ENCODE measurements at regions of chr1 and their contacts with region 1.

Region 1: GRCh38 chr1:224922404-224923164 is 6.9 kb upstream of the DNAH14 start:
- DNase-seq: peak; percentile 76
- H3K4me3 Mint-ChIP-seq: no peak overlapping the region
- H3K27ac Mint-ChIP-seq: no peak overlapping the region
- H3K4me1 Mint-ChIP-seq: peaks cover 4% of the 10 kb centered on the region
- H3K27me3 Mint-ChIP-seq: no peaks in the 10 kb centered on the region
- CTCF ChIP-seq: peak; percentile 99

Region 2: DNA sequence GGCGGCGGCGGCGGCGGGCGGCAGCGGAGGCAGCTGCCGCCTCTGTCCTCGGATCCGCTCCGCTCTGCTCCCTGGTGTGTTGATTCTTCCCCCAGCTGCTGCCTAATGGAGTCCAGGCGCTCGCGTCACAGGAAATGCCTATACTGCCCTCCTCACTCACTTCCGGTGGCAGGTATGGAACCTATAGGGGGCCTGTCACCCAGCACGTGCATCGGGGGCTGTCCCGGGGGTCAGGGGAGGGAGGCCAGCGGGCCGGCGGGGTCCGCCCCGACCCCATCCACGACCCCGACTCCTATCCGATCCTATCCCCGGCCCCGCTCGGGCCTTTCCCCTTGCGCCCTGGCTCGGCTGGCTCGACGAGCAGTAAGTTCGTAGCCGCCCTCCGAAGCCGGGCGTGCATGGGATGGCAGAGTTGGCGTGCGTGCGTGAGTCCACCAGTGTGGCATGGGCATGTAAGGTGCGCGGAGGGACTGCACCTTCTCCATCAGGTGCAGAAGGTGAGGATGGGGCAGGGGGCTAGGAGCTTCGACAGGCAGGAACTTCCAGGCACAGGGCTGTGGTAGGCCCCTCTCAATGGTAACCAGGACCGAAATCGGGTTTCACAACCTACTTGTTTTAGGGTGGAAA is 487.8 kb before region 1 on chr1 and contains the start of gene WDR26:
- CTCF ChIA-PET with region 1: interaction called, 12 read pairs
- POLR2A ChIA-PET with region 1: interaction called, 3 read pairs
- intact Hi-C with region 1: loop called (anchors 5 kb)
- DNase-seq: peak; percentile 96
- H3K4me3 Mint-ChIP-seq: peak within 1 kb of the TSS; percentile 80
- H3K27ac Mint-ChIP-seq: peak within 1 kb of the TSS; percentile 69
- H3K4me1 Mint-ChIP-seq: peaks cover 44% of the 10 kb centered on the region
- H3K27me3 Mint-ChIP-seq: no peaks in the 10 kb centered on the region
- CTCF ChIP-seq: peak; percentile 18
- total RNA-seq, gene WDR26: 149 and 156 TPM in 2 replicates

Region 3: GRCh38 chr1:224542783-224543440 is 379.7 kb before region 1 on chr1:
- CTCF ChIA-PET with region 1: interaction called, 22 read pairs
- POLR2A ChIA-PET with region 1: no interaction called
- intact Hi-C with region 1: no loop called
- DNase-seq: peak; percentile 92
- H3K4me3 Mint-ChIP-seq: no peak overlapping the region
- H3K27ac Mint-ChIP-seq: peak overlapping the region; percentile 59
- H3K4me1 Mint-ChIP-seq: peaks cover 22% of the 10 kb centered on the region
- H3K27me3 Mint-ChIP-seq: no peaks in the 10 kb centered on the region
- CTCF ChIP-seq: no peak

Region 4: GRCh38 chr1:224860488-224861338 is 61.9 kb before region 1 on chr1:
- CTCF ChIA-PET with region 1: interaction called, 167 read pairs
- POLR2A ChIA-PET with region 1: interaction called, 4 read pairs
- intact Hi-C with region 1: no loop called
- DNase-seq: no peak
- H3K4me3 Mint-ChIP-seq: no peak overlapping the region
- H3K27ac Mint-ChIP-seq: no peak overlapping the region
- H3K4me1 Mint-ChIP-seq: no peaks in the 10 kb centered on the region
- H3K27me3 Mint-ChIP-seq: peaks cover 22% of the 10 kb centered on the region
- CTCF ChIP-seq: no peak

Region 5: GRCh38 chr1:224894918-224895317 is 27.7 kb before region 1 on chr1:
- CTCF ChIA-PET with region 1: interaction called, 47 read pairs
- POLR2A ChIA-PET with region 1: no interaction called
- intact Hi-C with region 1: no loop called
- DNase-seq: peak; percentile 62
- H3K4me3 Mint-ChIP-seq: no peak overlapping the region
- H3K27ac Mint-ChIP-seq: no peak overlapping the region
- H3K4me1 Mint-ChIP-seq: no peaks in the 10 kb centered on the region
- H3K27me3 Mint-ChIP-seq: peaks cover 9% of the 10 kb centered on the region
- CTCF ChIP-seq: peak; percentile 47

Region 6: GRCh38 chr1:224939844-224940425 is 17.4 kb after region 1 on chr1:
- CTCF ChIA-PET with region 1: interaction called, 13 read pairs
- POLR2A ChIA-PET with region 1: interaction called, 5 read pairs
- intact Hi-C with region 1: no loop called
- DNase-seq: no peak
- H3K4me3 Mint-ChIP-seq: no peak overlapping the region
- H3K27ac Mint-ChIP-seq: no peak overlapping the region
- H3K4me1 Mint-ChIP-seq: no peaks in the 10 kb centered on the region
- H3K27me3 Mint-ChIP-seq: no peaks in the 10 kb centered on the region
- CTCF ChIP-seq: no peak

Region 7: DNA sequence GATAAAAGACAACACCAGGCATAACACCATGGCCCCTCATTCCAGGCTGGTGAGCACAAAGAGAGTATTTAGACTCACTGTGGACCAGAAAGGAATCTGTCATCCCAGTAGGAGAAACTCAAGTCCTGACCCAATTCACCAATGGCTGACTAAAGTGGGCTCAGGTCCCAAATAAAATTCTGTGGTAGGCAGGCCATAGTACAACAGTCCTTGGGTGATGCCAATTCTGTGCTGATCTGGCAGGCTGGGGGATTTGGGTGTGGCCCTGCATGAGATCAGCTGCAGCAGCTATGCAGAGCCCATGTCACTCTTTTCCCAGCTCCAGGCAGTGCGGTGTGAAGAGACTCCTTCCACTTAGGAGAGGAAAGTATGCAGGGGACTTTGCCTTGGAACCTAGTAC is 260.1 kb after region 1 on chr1:
- CTCF ChIA-PET with region 1: no interaction called
- POLR2A ChIA-PET with region 1: no interaction called
- intact Hi-C with region 1: no loop called
- DNase-seq: no peak
- H3K4me3 Mint-ChIP-seq: no peak overlapping the region
- H3K27ac Mint-ChIP-seq: no peak overlapping the region
- H3K4me1 Mint-ChIP-seq: no peaks in the 10 kb centered on the region
- H3K27me3 Mint-ChIP-seq: no peaks in the 10 kb centered on the region
- CTCF ChIP-seq: no peak

Region 8: GRCh38 chr1:225242623-225243022 is 320.0 kb after region 1 on chr1:
- CTCF ChIA-PET with region 1: no interaction called
- POLR2A ChIA-PET with region 1: no interaction called
- intact Hi-C with region 1: no loop called
- DNase-seq: no peak
- H3K4me3 Mint-ChIP-seq: no peak overlapping the region
- H3K27ac Mint-ChIP-seq: no peak overlapping the region
- H3K4me1 Mint-ChIP-seq: no peaks in the 10 kb centered on the region
- H3K27me3 Mint-ChIP-seq: no peaks in the 10 kb centered on the region
- CTCF ChIP-seq: no peak